ENCODE measurements at regions of chr14 and their contacts with region 1.

Region 1: GRCh38 chr14:31510222-31510621 is 22.4 kb upstream of the GPR33 start:
- DNase-seq: no peak
- ATAC-seq: no peak
- H3K4me3 Mint-ChIP-seq: no peak overlapping the region
- H3K27ac Mint-ChIP-seq: no peak overlapping the region
- H3K4me1 Mint-ChIP-seq: no peaks in the 10 kb centered on the region
- H3K27me3 Mint-ChIP-seq: no peaks in the 10 kb centered on the region
- CTCF ChIP-seq: peak; percentile 36

Region 2: DNA sequence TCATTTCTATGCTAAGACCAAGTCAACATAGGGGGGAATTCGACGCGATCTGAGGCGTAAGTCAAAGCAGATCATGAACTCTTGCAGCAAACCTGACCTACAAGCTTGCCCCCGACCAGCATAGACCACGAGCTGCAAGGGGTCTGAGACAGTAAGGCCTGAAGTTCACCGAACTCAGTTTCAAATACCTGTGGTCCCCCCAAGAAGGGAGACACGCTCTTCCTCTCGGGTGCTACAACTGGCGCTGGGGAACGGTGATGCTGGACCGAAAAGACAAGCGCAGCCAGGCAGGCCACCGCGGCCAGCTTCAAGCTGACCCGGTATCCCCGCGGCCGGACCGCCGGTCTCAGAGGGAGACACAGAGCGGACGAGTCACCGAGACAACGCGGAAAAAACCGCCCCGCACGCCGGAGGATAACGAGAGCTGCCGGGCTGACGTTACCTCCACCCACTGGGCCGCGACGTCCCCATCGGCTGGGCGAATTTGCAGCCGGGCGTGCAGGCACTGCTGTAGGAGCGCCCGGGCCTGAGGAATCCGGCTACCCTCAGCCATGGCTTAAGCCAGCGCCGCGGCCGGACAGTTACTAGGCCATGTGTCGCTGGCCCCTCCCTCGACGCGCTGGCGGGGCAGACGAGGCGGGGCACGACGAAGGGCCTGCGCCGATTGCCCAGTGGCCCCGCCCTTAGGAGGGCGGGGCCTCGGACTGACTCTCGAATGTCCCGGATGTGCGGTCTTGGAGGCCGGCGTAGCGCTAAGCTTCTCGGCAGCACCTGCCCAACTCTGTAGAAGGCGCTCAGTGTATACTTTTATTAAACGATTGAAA is 53.2 kb before region 1 on chr14 and contains the start of gene DTD2:
- CTCF ChIA-PET with region 1: no interaction called
- POLR2A ChIA-PET with region 1: no interaction called
- intact Hi-C with region 1: loop called (anchors 1 kb)
- DNase-seq: peak; percentile 82
- ATAC-seq: peak; percentile 98
- H3K4me3 Mint-ChIP-seq: peak within 1 kb of the TSS; percentile 99
- H3K27ac Mint-ChIP-seq: peak within 1 kb of the TSS; percentile 96
- H3K4me1 Mint-ChIP-seq: peaks cover 31% of the 10 kb centered on the region
- H3K27me3 Mint-ChIP-seq: no peaks in the 10 kb centered on the region
- CTCF ChIP-seq: no peak
- total RNA-seq, gene DTD2: 19.8 and 21.3 TPM in 2 replicates

Region 3: GRCh38 chr14:31582286-31582691 is 72.1 kb after region 1 on chr14:
- CTCF ChIA-PET with region 1: no interaction called
- POLR2A ChIA-PET with region 1: no interaction called
- intact Hi-C with region 1: no loop called
- DNase-seq: no peak
- ATAC-seq: no peak
- H3K4me3 Mint-ChIP-seq: no peak overlapping the region
- H3K27ac Mint-ChIP-seq: no peak overlapping the region
- H3K4me1 Mint-ChIP-seq: peaks cover 4% of the 10 kb centered on the region
- H3K27me3 Mint-ChIP-seq: no peaks in the 10 kb centered on the region
- CTCF ChIP-seq: no peak

Region 4: GRCh38 chr14:31819304-31819703 is 309.1 kb after region 1 on chr14:
- CTCF ChIA-PET with region 1: no interaction called
- POLR2A ChIA-PET with region 1: no interaction called
- intact Hi-C with region 1: no loop called
- DNase-seq: no peak
- ATAC-seq: no peak
- H3K4me3 Mint-ChIP-seq: no peak overlapping the region
- H3K27ac Mint-ChIP-seq: no peak overlapping the region
- H3K4me1 Mint-ChIP-seq: no peaks in the 10 kb centered on the region
- H3K27me3 Mint-ChIP-seq: no peaks in the 10 kb centered on the region
- CTCF ChIP-seq: no peak

Region 5: GRCh38 chr14:31926123-31926522 is 415.9 kb after region 1 on chr14:
- CTCF ChIA-PET with region 1: no interaction called
- POLR2A ChIA-PET with region 1: no interaction called
- intact Hi-C with region 1: loop called (anchors 5 kb)
- DNase-seq: no peak
- ATAC-seq: peak; percentile 47
- H3K4me3 Mint-ChIP-seq: no peak overlapping the region
- H3K27ac Mint-ChIP-seq: no peak overlapping the region
- H3K4me1 Mint-ChIP-seq: no peaks in the 10 kb centered on the region
- H3K27me3 Mint-ChIP-seq: no peaks in the 10 kb centered on the region
- CTCF ChIP-seq: no peak

Region 6: GRCh38 chr14:32252030-32252670 is 741.9 kb after region 1 on chr14:
- CTCF ChIA-PET with region 1: interaction called, 73 read pairs
- POLR2A ChIA-PET with region 1: no interaction called
- intact Hi-C with region 1: loop called (anchors 1 kb)
- DNase-seq: no peak
- ATAC-seq: peak; percentile 88
- H3K4me3 Mint-ChIP-seq: no peak overlapping the region
- H3K27ac Mint-ChIP-seq: no peak overlapping the region
- H3K4me1 Mint-ChIP-seq: no peaks in the 10 kb centered on the region
- H3K27me3 Mint-ChIP-seq: no peaks in the 10 kb centered on the region
- CTCF ChIP-seq: peak; percentile 46

Region 7: DNA sequence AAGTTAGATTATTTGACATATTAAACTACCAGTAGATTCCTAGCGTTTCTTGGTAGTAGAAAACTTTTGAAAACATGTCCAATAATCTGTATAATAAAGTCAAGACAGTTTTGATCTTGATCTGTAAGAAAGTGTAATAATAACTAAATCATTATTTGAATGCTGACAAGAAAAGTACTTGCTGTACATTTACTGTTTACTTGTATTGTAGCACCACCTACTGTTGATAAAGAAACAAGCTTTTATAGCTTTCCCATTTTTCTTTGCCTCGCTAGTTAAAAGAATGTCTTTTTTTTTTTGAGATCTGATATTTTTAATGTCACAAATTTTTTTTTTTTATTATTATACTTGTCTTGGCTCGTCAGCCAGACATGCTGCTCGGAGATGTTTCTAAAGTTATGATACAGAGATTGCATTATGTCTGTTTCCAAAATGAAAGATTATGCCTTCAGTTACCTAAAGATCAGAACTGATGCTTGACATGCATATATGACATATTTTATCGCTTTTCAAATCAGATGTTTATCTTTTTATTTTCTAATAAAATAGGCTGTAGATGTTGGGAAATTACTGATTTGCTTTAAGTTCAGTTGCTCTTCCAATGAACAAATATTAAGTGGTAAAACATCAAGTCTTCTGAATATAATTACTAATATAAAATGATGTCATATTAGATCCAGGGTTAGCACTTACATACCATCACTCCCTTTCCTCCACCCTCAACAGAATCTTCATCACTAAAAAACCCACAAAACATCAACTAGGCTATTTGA is 959.4 kb after region 1 on chr14:
- CTCF ChIA-PET with region 1: interaction called, 5 read pairs
- POLR2A ChIA-PET with region 1: no interaction called
- intact Hi-C with region 1: loop called (anchors 2 kb)
- DNase-seq: no peak
- ATAC-seq: no peak
- H3K4me3 Mint-ChIP-seq: no peak overlapping the region
- H3K27ac Mint-ChIP-seq: no peak overlapping the region
- H3K4me1 Mint-ChIP-seq: no peaks in the 10 kb centered on the region
- H3K27me3 Mint-ChIP-seq: no peaks in the 10 kb centered on the region
- CTCF ChIP-seq: no peak

Region 8: DNA sequence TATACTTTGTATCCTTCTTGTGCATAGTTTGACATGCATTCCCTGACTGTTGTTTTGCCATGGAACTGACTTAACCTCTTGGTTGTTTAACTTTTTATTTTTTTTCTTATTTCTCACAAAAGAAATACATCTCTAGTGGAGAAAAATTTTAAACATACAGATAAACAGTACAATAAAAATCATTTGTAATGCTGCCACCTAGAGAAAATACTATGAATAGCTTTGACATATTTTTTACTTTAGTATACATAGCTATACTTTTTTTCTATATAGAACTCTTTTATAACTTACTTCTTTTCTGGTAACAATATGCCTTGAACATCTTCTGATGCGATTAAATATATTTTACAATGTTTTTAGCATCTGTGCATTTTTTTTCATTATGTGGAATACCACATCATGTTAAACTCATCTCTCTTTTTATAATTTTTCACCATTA is 1003.4 kb after region 1 on chr14:
- CTCF ChIA-PET with region 1: no interaction called
- POLR2A ChIA-PET with region 1: no interaction called
- intact Hi-C with region 1: loop called (anchors 2 kb)
- DNase-seq: no peak
- ATAC-seq: no peak
- H3K4me3 Mint-ChIP-seq: no peak overlapping the region
- H3K27ac Mint-ChIP-seq: no peak overlapping the region
- H3K4me1 Mint-ChIP-seq: no peaks in the 10 kb centered on the region
- H3K27me3 Mint-ChIP-seq: peaks cover 19% of the 10 kb centered on the region
- CTCF ChIP-seq: no peak

Region 9: DNA sequence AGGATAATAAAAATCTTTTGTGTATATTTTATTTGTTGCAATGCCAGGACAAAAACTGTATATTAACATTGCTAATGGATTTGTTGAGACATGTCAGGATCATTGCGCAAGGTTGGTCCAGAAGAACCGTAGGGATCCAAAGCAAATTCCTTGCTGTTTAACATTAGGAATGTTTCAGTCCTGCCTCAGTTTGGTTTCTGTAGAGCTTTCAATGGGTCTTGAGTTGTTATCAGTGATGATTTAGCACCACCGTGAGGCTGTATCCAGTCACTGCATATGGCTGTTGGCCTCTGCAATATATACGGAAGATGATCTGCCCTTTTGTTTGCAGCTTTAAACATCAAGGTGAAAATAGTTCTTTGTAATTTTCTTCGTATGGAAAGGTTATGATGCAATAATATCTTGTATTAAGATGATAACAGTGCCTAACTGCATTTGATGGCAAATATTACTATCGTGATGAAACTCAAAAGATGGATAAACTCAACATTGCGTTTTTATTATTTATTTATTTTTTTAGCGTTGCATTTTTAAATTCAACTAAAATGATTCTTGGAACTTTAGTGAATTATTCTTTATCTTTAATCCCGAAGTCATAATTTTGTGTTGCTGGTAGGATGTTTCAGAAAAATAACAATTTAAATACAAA is 1050.1 kb after region 1 on chr14:
- CTCF ChIA-PET with region 1: interaction called, 3 read pairs
- POLR2A ChIA-PET with region 1: no interaction called
- intact Hi-C with region 1: loop called (anchors 5 kb)
- DNase-seq: no peak
- ATAC-seq: no peak
- H3K4me3 Mint-ChIP-seq: no peak overlapping the region
- H3K27ac Mint-ChIP-seq: no peak overlapping the region
- H3K4me1 Mint-ChIP-seq: no peaks in the 10 kb centered on the region
- H3K27me3 Mint-ChIP-seq: no peaks in the 10 kb centered on the region
- CTCF ChIP-seq: no peak